Left ventricle myocardium superior (tissue), 1 donor: ENCODE measurements at regions of chr2 and their contacts with region 1.

Region 1: DNA sequence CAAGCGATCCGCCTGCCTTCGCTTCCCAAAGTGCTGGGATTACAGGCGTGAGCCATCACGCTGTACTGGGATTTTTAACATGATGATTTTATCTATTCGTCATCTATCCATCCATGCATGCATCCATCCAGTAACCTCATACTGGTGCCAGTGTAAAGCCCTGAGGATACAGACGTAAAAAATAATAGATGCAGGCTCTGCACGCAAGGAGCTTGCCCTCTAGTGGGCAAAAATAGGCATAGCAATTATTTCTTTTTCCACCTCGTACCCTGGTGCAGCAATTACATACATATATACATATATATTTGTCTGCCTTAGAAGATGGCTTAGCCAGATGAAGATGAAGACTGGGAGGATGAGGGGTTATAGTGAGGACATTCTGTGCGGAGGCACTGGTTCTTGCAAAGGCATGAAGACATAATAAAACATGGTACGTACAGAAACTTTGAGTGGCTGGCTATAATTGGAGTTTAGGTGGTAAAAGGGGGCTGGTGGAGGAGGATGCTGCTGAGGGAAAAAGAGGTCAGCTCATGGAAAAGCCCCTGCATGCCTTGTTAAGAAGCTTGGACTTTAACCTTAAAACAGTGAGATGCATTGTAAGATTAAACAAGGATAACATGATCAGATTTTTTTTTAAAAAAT is 19.6 kb upstream of the RPIA start:
- DNase-seq: no peak
- ATAC-seq: peak; percentile 73

Region 2: GRCh38 chr2:88590998-88591613 is 80.8 kb before region 1 on chr2:
- intact Hi-C with region 1: loop called (anchors 2 kb)
- DNase-seq: no peak
- ATAC-seq: peak; percentile 84